CD8-positive, alpha-beta T cell (primary cell): ENCODE measurements at regions of chr2 and their contacts with region 1.

Region 1: GRCh38 chr2:84840306-84840705 is 40.6 kb downstream of the TRABD2A start:
- DNase-seq: no peak
- ATAC-seq: peak; percentile 19
- H3K4me3 ChIP-seq: peak overlapping the region in 1 of 2 experiments; percentile 31
- H3K4me3 Mint-ChIP-seq: peak overlapping the region; percentile 71
- H3K27ac ChIP-seq: peak overlapping the region; percentile 64 to 72
- H3K27ac Mint-ChIP-seq: peak overlapping the region; percentile 93
- H3K4me1 ChIP-seq: peaks cover 90% of the 10 kb centered on the region
- H3K4me1 Mint-ChIP-seq: peaks cover 88% of the 10 kb centered on the region
- H3K27me3 ChIP-seq: no peaks in the 10 kb centered on the region
- H3K27me3 Mint-ChIP-seq: no peaks in the 10 kb centered on the region
- CTCF ChIP-seq: no peak

Region 2: DNA sequence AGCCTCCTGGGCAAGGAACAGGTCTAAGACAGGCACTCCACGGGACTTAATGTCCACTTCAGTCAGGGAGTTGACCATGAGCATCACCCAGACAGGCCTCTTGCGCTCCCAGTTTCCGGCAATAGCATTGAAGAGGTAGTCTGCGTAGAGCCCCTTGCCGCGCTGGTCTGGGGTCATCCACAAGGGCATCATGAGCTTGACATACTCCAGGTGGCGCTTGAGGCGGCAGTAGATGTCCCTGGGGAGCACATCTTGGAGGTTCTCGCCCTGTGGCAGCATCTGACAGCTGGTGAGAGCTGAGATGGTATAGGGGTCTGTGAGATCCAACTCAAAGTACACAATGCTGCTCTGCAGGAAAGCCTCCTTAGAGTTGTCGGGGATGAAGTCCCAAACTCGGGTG is 30.0 kb after region 1 on chr2:
- CTCF ChIA-PET with region 1: interaction called, 6 read pairs
- POLR2A ChIA-PET with region 1: interaction called, 3 read pairs
- intact Hi-C with region 1: loop called in 1 of 2 experiments (anchors 5 kb)
- DNase-seq: peak in 2 of 9 experiments; percentile 39 to 48
- ATAC-seq: no peak
- H3K4me3 ChIP-seq: no peak overlapping the region
- H3K4me3 Mint-ChIP-seq: peak overlapping the region; percentile 32
- H3K27ac ChIP-seq: no peak overlapping the region
- H3K27ac Mint-ChIP-seq: peak overlapping the region; percentile 82
- H3K4me1 ChIP-seq: peaks cover 82% of the 10 kb centered on the region
- H3K4me1 Mint-ChIP-seq: peaks cover 82% of the 10 kb centered on the region
- H3K27me3 ChIP-seq: no peaks in the 10 kb centered on the region
- H3K27me3 Mint-ChIP-seq: no peaks in the 10 kb centered on the region
- CTCF ChIP-seq: no peak